ENCODE measurements at regions of chr2 and their contacts with region 1.

Region 1: DNA sequence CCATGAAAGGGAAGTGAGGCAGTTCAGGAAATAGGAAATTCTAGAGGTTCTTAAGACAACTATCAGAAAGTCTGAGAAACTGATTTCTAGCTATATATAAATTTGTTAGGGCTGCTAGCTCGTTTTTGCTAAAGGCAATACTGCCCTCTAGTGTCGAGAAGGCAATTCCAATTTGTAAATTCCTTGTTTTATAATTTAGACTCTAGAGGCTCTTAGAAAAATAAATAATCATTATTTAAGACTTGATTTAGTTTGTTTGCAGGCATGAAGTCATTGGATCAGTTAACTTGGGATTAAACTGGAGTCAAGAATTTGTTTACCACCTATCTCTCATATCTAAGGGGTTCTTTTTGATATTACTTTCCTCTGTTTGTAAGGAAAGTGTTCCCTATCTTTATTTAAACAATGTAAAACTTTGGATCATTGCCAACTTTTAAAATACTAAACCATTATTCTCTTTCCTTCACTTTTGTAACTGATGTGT is 66.2 kb downstream of the ACVR2A start:
- DNase-seq: peak; percentile 91
- H3K4me3 ChIP-seq: no peak overlapping the region
- H3K27ac ChIP-seq: no peak overlapping the region
- H3K4me1 ChIP-seq: peaks cover 22% of the 10 kb centered on the region
- H3K27me3 ChIP-seq: no peaks in the 10 kb centered on the region
- CTCF ChIP-seq: peak; percentile 37 to 44
- POLR2A ChIP-seq: no peak

Region 2: GRCh38 chr2:146821836-146822316 is 1089.2 kb before region 1 on chr2:
- CTCF ChIA-PET with region 1: interaction called, 3 read pairs
- POLR2A ChIA-PET with region 1: no interaction called
- dilution Hi-C with region 1: no loop called
- intact Hi-C with region 1: loop called (anchors 2 kb)
- DNase-seq: peak; percentile 85
- H3K4me3 ChIP-seq: no peak overlapping the region
- H3K27ac ChIP-seq: peak overlapping the region; percentile 80
- H3K4me1 ChIP-seq: peaks cover 36% of the 10 kb centered on the region
- H3K27me3 ChIP-seq: no peaks in the 10 kb centered on the region
- CTCF ChIP-seq: peak; percentile 22 to 24
- POLR2A ChIP-seq: no peak

Region 3: GRCh38 chr2:146927080-146927711 is 983.8 kb before region 1 on chr2:
- CTCF ChIA-PET with region 1: interaction called, 77 read pairs
- POLR2A ChIA-PET with region 1: no interaction called
- dilution Hi-C with region 1: no loop called
- intact Hi-C with region 1: loop called (anchors 1 kb)
- DNase-seq: peak; percentile 59
- H3K4me3 ChIP-seq: no peak overlapping the region
- H3K27ac ChIP-seq: no peak overlapping the region
- H3K4me1 ChIP-seq: no peaks in the 10 kb centered on the region
- H3K27me3 ChIP-seq: no peaks in the 10 kb centered on the region
- CTCF ChIP-seq: peak; percentile 32 to 62
- POLR2A ChIP-seq: no peak

Region 4: DNA sequence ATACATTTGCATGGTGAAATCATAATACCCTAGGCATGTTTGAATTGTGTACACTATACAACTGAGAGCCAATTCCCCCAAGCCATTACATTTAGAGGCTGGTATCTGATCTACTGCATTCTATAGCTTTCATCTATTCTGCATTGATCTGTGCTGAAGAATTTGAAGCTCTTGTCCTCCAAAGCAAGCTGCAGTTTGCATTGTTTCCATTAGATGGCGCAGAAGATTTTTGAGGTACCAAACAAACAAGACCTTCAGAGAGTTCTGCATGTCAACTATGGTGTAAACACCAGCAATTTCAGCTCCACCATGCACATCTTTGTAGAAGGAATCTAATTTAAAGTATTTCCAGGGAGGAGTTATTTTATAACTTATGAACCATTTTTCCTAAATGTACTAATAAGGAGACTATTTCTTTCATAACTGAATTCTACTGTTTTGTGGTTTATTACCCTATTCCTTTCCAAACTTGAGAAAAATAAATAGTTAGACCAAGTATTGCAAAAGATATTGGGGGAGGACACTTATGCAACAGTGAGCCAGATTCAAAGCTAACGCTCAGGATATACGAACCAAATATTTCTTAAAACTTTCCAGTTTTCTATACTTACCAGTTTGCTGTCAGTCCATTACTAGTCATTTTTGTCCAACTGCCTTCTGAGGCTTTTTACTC is 828.0 kb before region 1 on chr2:
- CTCF ChIA-PET with region 1: interaction called, 151 read pairs
- POLR2A ChIA-PET with region 1: no interaction called
- dilution Hi-C with region 1: no loop called
- intact Hi-C with region 1: loop called (anchors 1 kb)
- DNase-seq: peak; percentile 73
- H3K4me3 ChIP-seq: no peak overlapping the region
- H3K27ac ChIP-seq: no peak overlapping the region
- H3K4me1 ChIP-seq: no peaks in the 10 kb centered on the region
- H3K27me3 ChIP-seq: no peaks in the 10 kb centered on the region
- CTCF ChIP-seq: peak; percentile 69
- POLR2A ChIP-seq: no peak

Region 5: GRCh38 chr2:148167855-148168254 is 256.8 kb after region 1 on chr2:
- CTCF ChIA-PET with region 1: no interaction called
- POLR2A ChIA-PET with region 1: no interaction called
- dilution Hi-C with region 1: no loop called
- intact Hi-C with region 1: no loop called
- DNase-seq: no peak
- H3K4me3 ChIP-seq: no peak overlapping the region
- H3K27ac ChIP-seq: no peak overlapping the region
- H3K4me1 ChIP-seq: no peaks in the 10 kb centered on the region
- H3K27me3 ChIP-seq: no peaks in the 10 kb centered on the region
- CTCF ChIP-seq: no peak
- POLR2A ChIP-seq: no peak